Heart left ventricle (tissue), 16 donors: ENCODE measurements at regions of chr1 and their contacts with region 1.

Region 1: DNA sequence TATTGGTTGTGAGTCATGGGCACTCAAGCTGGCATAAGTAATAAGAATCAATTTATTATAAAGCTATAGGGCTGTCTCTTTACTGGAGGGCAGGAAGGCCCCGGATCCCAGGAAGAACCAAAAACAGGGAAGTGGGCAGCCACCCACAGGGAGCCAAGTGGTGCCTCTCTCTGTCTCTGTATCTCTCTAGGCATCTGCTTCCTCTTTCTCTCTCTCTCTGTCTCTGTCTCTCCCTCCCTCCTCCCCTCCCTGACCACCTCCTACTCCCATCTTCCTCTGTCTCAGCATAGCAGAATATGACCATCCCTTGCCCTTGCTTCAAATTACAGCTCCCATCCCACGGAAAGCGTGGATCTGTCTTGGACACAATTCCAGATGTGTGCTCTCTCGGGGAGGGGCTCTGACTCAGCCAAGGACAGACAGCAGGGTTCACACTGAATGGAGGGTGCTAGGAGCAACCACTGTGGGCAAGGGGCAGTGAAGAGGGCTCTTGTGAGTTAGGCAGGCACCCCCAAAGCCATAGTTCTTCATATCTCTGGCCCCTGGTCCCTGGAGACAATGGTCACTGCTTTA is 80.4 kb upstream of the LPGAT1 start:
- DNase-seq: no peak
- ATAC-seq: peak in 1 of 4 donors; percentile 70
- H3K4me3 ChIP-seq: no peak overlapping the region
- H3K27ac ChIP-seq: no peak overlapping the region
- H3K4me1 ChIP-seq: peaks cover 0 to 31% (median 0%) of the 10 kb centered on the region in 12 donors
- H3K27me3 ChIP-seq: no peaks in the 10 kb centered on the region
- CTCF ChIP-seq: no peak
- POLR2A ChIP-seq: no peak

Region 2: DNA sequence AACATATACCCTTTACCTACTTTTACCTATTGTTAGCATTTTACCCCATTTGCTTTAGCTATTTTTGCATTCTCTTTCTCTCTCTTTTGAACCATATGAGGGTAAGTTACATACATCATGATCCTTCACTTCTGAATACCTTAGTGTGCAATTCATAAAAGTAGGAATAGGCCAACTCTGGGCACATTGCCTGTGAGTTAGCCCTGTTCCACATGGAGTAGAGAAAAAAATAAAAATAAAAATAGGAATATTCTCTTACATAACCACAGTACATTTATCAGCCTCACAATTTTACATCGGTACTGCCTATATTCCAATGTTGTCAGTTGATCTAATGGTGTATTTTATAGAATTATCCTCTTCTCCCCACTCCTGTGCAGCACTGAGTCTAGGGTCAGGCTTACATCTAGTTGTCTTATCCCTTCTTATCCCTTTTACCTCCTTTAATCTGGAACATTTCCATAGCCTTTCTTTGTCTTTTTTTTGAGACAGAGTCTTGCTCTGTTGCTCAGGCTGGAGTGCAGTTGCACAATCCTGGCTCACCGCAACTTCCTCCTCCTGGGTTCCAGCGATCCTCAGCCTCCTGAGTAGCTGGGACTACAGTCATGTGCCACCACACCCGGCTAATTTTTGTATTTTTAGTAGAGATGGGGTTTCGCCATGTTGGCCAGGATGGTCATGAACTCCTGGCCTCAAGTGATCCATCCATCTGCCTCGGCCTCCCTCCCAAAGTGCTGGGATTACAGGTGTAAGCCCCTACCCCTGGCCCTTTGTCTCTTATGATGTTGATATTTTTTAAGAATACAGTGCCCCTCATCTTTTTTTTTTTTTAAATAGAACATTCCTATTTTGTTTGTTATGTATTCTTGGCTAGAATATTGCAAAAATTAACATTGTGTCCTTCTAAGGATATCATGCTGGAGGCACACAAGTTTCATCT is 320.9 kb before region 1 on chr1:
- intact Hi-C with region 1: no loop called
- DNase-seq: peak; percentile 59 to 83 (median 79)
- ATAC-seq: peak; percentile 75 to 93 (median 84)
- H3K4me3 ChIP-seq: no peak overlapping the region
- H3K27ac ChIP-seq: peak overlapping the region in 4 of 12 donors; percentile 18 to 50 (median 42)
- H3K4me1 ChIP-seq: peaks cover 0 to 44% (median 4%) of the 10 kb centered on the region in 12 donors
- H3K27me3 ChIP-seq: no peaks in the 10 kb centered on the region
- CTCF ChIP-seq: no peak
- POLR2A ChIP-seq: no peak

Region 3: GRCh38 chr1:211865180-211865579 is 45.8 kb before region 1 on chr1:
- intact Hi-C with region 1: loop called in 1 of 10 experiments (anchors 10 kb)
- DNase-seq: no peak
- ATAC-seq: no peak
- H3K4me3 ChIP-seq: no peak overlapping the region
- H3K27ac ChIP-seq: no peak overlapping the region
- H3K4me1 ChIP-seq: no peaks in the 10 kb centered on the region
- H3K27me3 ChIP-seq: peaks cover 0 to under 1% (median 0%) of the 10 kb centered on the region in 9 donors
- CTCF ChIP-seq: no peak
- POLR2A ChIP-seq: no peak